CD4-positive, alpha-beta T cell (primary cell): ENCODE measurements at regions of chr15 and their contacts with region 1.

Region 1: DNA sequence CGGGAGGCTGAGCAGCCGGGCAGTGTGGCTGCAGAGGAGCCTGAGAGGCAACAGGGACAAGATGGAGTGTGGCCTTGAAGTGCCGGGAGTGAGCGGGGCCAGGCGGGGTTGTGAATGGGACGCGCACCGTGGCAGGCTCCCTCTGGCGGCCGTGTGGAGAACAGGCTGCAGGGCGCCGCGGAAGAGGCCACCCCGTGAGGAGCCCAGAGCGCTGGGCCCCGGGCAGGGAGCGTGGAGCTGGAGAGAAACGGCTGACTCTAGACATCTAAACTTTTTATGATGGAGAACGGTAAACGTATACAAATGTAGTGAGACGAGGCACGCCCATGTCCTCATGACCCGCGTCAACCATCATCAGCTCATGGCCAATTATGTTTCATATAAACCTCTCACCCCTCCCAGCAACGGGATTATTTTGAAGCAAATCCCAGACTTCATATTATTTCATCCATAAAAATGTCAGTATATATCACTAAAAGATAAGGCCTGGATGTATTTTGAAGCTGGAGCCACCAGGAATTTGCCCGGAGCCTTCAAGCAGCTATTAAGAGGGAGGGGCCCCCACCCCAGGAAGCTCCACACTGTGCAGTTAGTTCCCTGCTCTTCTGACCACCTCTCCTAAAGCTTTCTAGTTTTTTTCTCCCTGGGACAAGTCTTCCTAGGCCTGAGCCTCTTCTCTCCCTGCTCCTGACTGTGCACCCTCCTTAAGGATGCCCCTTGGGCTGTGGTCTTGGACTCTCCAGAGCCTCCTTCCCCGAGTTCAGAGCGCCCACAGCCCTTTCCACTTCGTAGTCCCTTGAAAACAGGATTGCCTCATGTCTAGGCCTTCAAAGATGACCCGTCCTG is 149.4 kb downstream of the SMAD6 start:
- DNase-seq: peak; percentile 52 to 85 (median 65)
- ATAC-seq: peak; percentile 98
- H3K4me3 ChIP-seq: no peak overlapping the region
- H3K4me3 Mint-ChIP-seq: no peak overlapping the region
- H3K27ac ChIP-seq: no peak overlapping the region
- H3K27ac Mint-ChIP-seq: no peak overlapping the region
- H3K4me1 ChIP-seq: peaks cover 8% of the 10 kb centered on the region
- H3K4me1 Mint-ChIP-seq: peaks cover 12% of the 10 kb centered on the region
- H3K27me3 ChIP-seq: peaks cover 0 to 3% of the 10 kb centered on the region in 2 experiments
- H3K27me3 Mint-ChIP-seq: peaks cover 16% of the 10 kb centered on the region
- CTCF ChIP-seq: peak; percentile 95

Region 2: DNA sequence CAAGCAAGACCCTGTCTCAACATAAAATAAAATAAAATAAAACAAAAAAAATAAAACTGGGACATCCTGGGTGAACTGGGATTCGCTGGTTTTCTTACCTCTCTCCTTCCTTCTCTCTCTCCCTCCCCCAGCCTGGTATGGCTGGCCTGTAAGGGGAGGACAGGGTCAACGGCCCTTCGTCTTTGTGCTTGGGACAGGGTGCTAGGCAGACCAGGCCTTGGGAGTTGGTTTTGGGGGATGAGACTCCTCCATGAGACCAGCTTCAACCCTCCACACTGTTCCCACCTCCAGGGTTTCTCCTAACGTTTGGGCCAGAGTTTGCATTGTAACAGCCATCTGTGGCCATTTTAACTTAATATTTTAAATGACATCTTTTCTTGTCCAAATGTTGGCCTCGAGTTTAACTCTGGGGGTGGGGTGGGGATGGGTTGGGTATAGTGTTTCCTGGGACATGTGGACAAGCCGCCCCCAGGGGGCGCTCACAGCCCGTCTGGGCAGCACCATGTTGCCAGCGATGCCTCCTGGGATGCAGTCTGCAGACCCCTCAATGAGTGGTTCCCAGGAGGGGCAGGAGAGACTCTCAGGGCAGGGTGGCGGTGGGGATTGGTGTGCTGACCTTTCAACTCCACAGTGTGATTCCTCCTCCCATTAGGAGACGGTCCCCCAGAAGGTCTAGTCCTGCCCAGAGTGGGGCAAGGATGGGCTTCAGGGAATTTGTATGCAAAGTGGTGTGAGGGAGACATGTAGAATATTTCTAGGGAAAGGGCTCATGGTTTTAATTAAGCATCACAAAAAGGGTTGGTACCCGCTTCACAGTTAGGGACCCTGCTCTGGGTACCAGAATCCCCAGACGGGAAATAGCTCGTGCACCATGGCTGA is 247.9 kb before region 1 on chr15:
- CTCF ChIA-PET with region 1: interaction called, 13 read pairs
- POLR2A ChIA-PET with region 1: no interaction called
- intact Hi-C with region 1: loop called (anchors 1 kb)
- DNase-seq: peak; percentile 36 to 80 (median 53)
- ATAC-seq: peak; percentile 57
- H3K4me3 ChIP-seq: no peak overlapping the region
- H3K4me3 Mint-ChIP-seq: no peak overlapping the region
- H3K27ac ChIP-seq: no peak overlapping the region
- H3K27ac Mint-ChIP-seq: no peak overlapping the region
- H3K4me1 ChIP-seq: no peaks in the 10 kb centered on the region
- H3K4me1 Mint-ChIP-seq: peaks cover under 1% of the 10 kb centered on the region
- H3K27me3 ChIP-seq: no peaks in the 10 kb centered on the region
- H3K27me3 Mint-ChIP-seq: peaks cover 6% of the 10 kb centered on the region
- CTCF ChIP-seq: peak; percentile 86

Region 3: GRCh38 chr15:66619151-66619903 is 232.1 kb before region 1 on chr15:
- CTCF ChIA-PET with region 1: interaction called, 3 read pairs
- POLR2A ChIA-PET with region 1: no interaction called
- intact Hi-C with region 1: loop called in 1 of 2 experiments (anchors 5 kb)
- DNase-seq: peak in 13 of 14 experiments; percentile 7 to 63 (median 24)
- ATAC-seq: peak; percentile 44
- H3K4me3 ChIP-seq: no peak overlapping the region
- H3K4me3 Mint-ChIP-seq: no peak overlapping the region
- H3K27ac ChIP-seq: no peak overlapping the region
- H3K27ac Mint-ChIP-seq: no peak overlapping the region
- H3K4me1 ChIP-seq: peaks cover 4% of the 10 kb centered on the region
- H3K4me1 Mint-ChIP-seq: peaks cover 5% of the 10 kb centered on the region
- H3K27me3 ChIP-seq: peaks cover 19 to 37% of the 10 kb centered on the region in 2 experiments
- H3K27me3 Mint-ChIP-seq: peaks cover 45% of the 10 kb centered on the region
- CTCF ChIP-seq: peak; percentile 69